Caco-2 (cell line): ENCODE measurements at regions of chr5 and their contacts with region 1.

Region 1: GRCh38 chr5:91186763-91187431 is 196.2 kb downstream of the ARRDC3 start:
- DNase-seq: no peak
- H3K4me3 ChIP-seq: no peak overlapping the region
- H3K4me3 Mint-ChIP-seq: peak overlapping the region; percentile 22
- H3K27ac Mint-ChIP-seq: peak overlapping the region; percentile 36
- H3K4me1 ChIP-seq: peaks cover 34% of the 10 kb centered on the region
- H3K4me1 Mint-ChIP-seq: peaks cover 39% of the 10 kb centered on the region
- H3K27me3 ChIP-seq: no peaks in the 10 kb centered on the region
- H3K27me3 Mint-ChIP-seq: no peaks in the 10 kb centered on the region
- CTCF ChIP-seq: no peak

Region 2: DNA sequence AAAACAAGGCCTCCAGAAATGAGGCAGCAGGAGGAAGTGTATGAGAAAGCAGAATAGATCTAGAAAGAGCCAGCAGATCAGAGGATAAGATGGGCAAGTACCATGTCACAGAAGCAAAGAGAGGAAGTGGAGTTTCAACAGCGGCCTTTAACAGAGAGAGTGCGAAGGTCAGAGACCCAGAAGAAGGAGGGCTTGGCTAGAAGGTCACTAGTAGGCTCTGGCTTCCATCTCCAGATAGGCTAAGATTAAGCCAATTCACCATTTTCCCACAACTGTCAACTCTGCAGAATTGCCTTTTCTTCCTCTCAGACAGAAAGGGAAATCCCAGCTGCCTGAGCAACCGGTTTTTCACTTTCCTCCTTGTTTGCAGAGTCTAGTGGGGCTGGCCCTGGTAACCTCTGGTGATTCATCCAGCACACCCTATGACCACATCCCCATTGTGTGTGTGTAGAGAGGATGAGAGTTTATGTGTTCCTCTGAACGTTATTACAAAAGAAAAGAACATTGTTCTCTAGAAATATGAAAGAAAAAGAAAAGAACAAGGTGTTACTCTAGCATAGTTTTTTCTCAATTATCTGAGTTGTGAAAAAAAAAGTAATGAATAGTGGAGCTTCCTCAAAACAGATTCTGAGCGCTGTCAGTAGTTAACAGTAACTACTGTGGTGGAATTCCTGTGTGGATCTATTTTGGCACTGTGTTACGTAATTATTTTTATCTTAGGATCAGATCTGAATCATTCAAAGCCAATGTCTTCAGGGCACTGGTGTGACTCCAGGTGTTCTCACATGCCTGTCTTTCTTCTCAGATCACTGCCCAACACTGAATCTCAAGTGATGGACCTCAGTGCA is 24.1 kb before region 1 on chr5:
- CTCF ChIA-PET with region 1: no interaction called
- POLR2A ChIA-PET with region 1: no interaction called
- intact Hi-C with region 1: loop called (anchors 1 kb)
- DNase-seq: peak; percentile 80 to 85
- H3K4me3 ChIP-seq: no peak overlapping the region
- H3K4me3 Mint-ChIP-seq: peak overlapping the region; percentile 20
- H3K27ac Mint-ChIP-seq: peak overlapping the region; percentile 62
- H3K4me1 ChIP-seq: peaks cover 33% of the 10 kb centered on the region
- H3K4me1 Mint-ChIP-seq: peaks cover 20% of the 10 kb centered on the region
- H3K27me3 ChIP-seq: no peaks in the 10 kb centered on the region
- H3K27me3 Mint-ChIP-seq: no peaks in the 10 kb centered on the region
- CTCF ChIP-seq: no peak

Region 3: DNA sequence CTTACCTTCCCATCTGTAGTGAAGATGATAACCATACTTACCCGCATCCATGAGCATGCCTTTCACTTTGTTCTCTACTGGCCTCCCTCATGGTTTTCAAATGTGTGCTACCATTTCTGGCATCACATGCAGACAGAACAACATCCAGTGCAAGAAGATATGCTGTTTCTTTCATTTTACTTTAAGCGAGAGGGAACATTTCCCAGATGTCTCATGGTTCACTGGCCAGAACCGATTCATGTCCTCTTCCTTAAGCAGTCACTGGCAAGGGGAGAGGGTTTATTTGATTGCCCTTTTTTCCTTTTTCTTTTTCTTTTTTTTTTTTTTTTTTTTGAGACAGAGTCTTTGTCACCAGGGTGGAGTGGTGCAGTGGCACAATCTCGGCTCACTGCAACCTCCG is 158.6 kb after region 1 on chr5:
- CTCF ChIA-PET with region 1: no interaction called
- POLR2A ChIA-PET with region 1: no interaction called
- intact Hi-C with region 1: no loop called
- DNase-seq: no peak
- H3K4me3 ChIP-seq: no peak overlapping the region
- H3K4me3 Mint-ChIP-seq: no peak overlapping the region
- H3K27ac Mint-ChIP-seq: no peak overlapping the region
- H3K4me1 ChIP-seq: no peaks in the 10 kb centered on the region
- H3K4me1 Mint-ChIP-seq: no peaks in the 10 kb centered on the region
- H3K27me3 ChIP-seq: no peaks in the 10 kb centered on the region
- H3K27me3 Mint-ChIP-seq: no peaks in the 10 kb centered on the region
- CTCF ChIP-seq: no peak